MCF 10A (cell line): ENCODE measurements at regions of chr17 and their contacts with region 1.

Region 1: DNA sequence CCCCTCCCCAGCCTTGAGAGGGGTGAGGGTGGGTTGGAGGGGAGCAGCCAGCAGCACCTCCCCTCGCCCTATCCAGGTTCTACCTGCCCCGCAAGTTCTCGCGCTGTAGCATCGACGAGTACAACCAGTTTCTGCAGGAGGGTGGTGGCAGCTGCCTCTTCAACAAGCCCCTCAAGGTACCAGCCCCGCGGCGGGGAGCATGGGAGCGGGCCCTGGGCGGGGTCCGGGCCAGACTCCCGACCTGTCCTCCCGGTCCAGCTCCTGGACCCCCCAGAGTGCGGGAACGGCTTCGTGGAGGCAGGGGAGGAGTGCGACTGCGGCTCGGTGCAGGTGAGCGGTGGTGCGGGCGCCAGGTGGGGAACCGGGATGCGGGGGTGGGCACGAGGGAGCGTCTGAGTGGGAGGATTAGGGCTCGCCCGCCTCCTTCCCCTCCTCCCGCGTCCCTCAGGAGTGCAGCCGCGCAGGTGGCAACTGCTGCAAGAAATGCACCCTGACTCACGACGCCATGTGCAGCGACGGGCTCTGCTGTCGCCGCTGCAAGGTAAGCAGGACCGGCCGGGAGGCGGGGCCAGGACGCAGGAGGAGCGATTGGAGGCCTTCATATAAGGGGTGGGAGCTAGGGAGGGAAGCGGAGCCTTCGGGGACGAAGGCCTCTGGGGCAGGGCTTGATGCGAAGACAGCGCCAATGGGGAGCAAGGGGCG is 16.5 kb downstream of the ADAM11 start:
- DNase-seq: peak; percentile 99
- H3K4me3 Mint-ChIP-seq: peak overlapping the region; percentile 84
- H3K27ac Mint-ChIP-seq: no peak overlapping the region
- H3K4me1 Mint-ChIP-seq: peaks cover 11% of the 10 kb centered on the region
- H3K27me3 Mint-ChIP-seq: peaks cover 13% of the 10 kb centered on the region
- CTCF ChIP-seq: no peak

Region 2: GRCh38 chr17:44543213-44543904 is 231.9 kb before region 1 on chr17:
- CTCF ChIA-PET with region 1: no interaction called
- POLR2A ChIA-PET with region 1: no interaction called
- intact Hi-C with region 1: no loop called
- DNase-seq: peak; percentile 60
- H3K4me3 Mint-ChIP-seq: peak overlapping the region; percentile 14
- H3K27ac Mint-ChIP-seq: peak overlapping the region; percentile 92
- H3K4me1 Mint-ChIP-seq: peaks cover 51% of the 10 kb centered on the region
- H3K27me3 Mint-ChIP-seq: no peaks in the 10 kb centered on the region
- CTCF ChIP-seq: no peak

Region 3: GRCh38 chr17:44794851-44795413 is 19.6 kb after region 1 on chr17:
- CTCF ChIA-PET with region 1: interaction called, 11 read pairs
- POLR2A ChIA-PET with region 1: no interaction called
- intact Hi-C with region 1: no loop called
- DNase-seq: peak; percentile 47
- H3K4me3 Mint-ChIP-seq: no peak overlapping the region
- H3K27ac Mint-ChIP-seq: peak overlapping the region; percentile 27
- H3K4me1 Mint-ChIP-seq: peaks cover 10% of the 10 kb centered on the region
- H3K27me3 Mint-ChIP-seq: no peaks in the 10 kb centered on the region
- CTCF ChIP-seq: no peak

Region 4: GRCh38 chr17:44829523-44830358 is 54.5 kb after region 1 on chr17 and contains the start of gene GJC1:
- CTCF ChIA-PET with region 1: interaction called, 6 read pairs
- POLR2A ChIA-PET with region 1: interaction called, 7 read pairs
- intact Hi-C with region 1: loop called (anchors 1 kb)
- DNase-seq: peak; percentile 29
- H3K4me3 Mint-ChIP-seq: peak within 1 kb of the TSS; percentile 95
- H3K27ac Mint-ChIP-seq: peak within 1 kb of the TSS; percentile 68
- H3K4me1 Mint-ChIP-seq: peaks cover 11% of the 10 kb centered on the region
- H3K27me3 Mint-ChIP-seq: no peaks in the 10 kb centered on the region
- CTCF ChIP-seq: no peak
- total RNA-seq, gene GJC1: 6.9 and 7.9 TPM in 2 replicates

Region 5: GRCh38 chr17:44864866-44865660 is 89.8 kb after region 1 on chr17:
- CTCF ChIA-PET with region 1: interaction called, 233 read pairs
- POLR2A ChIA-PET with region 1: interaction called, 11 read pairs
- intact Hi-C with region 1: loop called (anchors 1 kb)
- DNase-seq: peak; percentile 71
- H3K4me3 Mint-ChIP-seq: no peak overlapping the region
- H3K27ac Mint-ChIP-seq: no peak overlapping the region
- H3K4me1 Mint-ChIP-seq: no peaks in the 10 kb centered on the region
- H3K27me3 Mint-ChIP-seq: no peaks in the 10 kb centered on the region
- CTCF ChIP-seq: peak; percentile 82

Region 6: GRCh38 chr17:44878627-44879221 is 103.4 kb after region 1 on chr17:
- CTCF ChIA-PET with region 1: interaction called, 48 read pairs
- POLR2A ChIA-PET with region 1: interaction called, 3 read pairs
- intact Hi-C with region 1: loop called (anchors 1 kb)
- DNase-seq: peak; percentile 42
- H3K4me3 Mint-ChIP-seq: no peak overlapping the region
- H3K27ac Mint-ChIP-seq: no peak overlapping the region
- H3K4me1 Mint-ChIP-seq: no peaks in the 10 kb centered on the region
- H3K27me3 Mint-ChIP-seq: no peaks in the 10 kb centered on the region
- CTCF ChIP-seq: peak; percentile 41

Region 7: DNA sequence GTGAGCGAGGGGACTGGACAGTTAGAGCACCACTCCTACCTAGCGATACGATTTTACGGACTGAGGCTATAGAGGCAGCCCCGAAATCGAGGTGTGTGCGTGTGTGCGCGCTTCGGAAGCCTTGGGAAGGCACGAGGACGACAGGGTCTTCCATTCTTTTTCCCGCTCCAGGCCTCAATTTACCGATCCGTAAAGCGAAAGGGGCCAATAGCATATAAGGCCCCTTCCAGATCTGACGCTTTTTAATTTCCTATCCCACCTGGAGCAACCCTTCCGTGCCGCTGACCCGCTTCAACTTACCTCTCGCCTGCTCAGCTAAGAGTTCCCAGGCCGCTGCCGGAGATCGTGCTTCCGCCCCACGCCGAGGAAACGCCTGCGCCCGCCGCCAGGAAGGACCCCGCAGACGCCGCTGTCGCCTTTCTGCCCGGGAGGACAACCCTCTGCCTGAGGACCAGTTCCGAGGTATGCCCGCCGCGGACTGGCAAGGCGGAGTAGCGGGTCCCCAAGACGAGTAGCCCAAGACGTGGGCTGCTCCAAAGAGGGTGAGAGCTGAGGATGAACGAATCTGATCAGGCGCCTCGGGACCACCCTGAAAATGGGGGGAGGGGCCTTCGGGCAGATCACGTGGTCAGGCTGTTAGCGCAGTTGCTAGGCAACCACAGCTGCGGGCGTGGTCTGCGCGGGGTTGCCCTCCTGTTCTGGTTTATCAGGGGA is 123.9 kb after region 1 on chr17 and contains the start of gene EFTUD2:
- CTCF ChIA-PET with region 1: interaction called, 10 read pairs
- POLR2A ChIA-PET with region 1: interaction called, 8 read pairs
- intact Hi-C with region 1: no loop called
- DNase-seq: peak; percentile 87
- H3K4me3 Mint-ChIP-seq: peak within 1 kb of the TSS; percentile 80
- H3K27ac Mint-ChIP-seq: peak within 1 kb of the TSS; percentile 99
- H3K4me1 Mint-ChIP-seq: peaks cover 21% of the 10 kb centered on the region
- H3K27me3 Mint-ChIP-seq: no peaks in the 10 kb centered on the region
- CTCF ChIP-seq: no peak
- total RNA-seq, gene EFTUD2: 119 and 125 TPM in 2 replicates

Region 8: DNA sequence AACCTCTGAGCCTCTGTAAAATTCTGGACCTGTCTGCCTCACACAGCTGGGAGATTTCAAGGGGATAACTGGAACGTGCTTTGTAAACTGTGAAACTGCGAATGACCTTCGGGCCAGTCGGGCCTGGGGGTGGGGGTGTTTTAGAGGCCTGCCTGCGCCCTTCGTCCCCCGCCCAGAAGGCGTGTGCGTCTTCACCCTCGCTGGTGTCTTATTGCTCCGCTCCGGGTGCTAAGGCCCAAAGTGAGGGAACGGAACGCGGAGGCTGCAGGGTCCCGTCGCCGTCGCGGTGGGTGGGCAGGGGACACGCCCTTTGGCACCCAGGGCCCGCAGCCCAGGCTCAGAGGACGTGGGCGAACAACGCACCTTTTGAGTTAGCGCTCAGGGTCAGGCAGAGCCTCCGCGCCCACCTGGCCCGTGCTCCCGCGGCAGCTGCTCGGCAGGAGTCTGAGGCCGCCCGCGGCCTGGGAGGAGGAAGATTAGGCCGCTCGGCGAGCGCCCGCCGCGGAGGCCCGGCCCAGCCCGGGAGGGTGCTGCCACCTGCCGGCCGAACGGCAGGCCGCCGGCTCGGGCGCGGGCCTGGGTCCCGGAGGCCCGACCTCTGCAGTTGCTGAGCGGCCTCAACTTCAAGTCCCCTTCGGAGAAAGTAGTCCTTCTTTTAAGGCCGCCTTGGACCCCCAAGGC is 246.5 kb after region 1 on chr17:
- CTCF ChIA-PET with region 1: interaction called, 5 read pairs
- POLR2A ChIA-PET with region 1: no interaction called
- intact Hi-C with region 1: loop called (anchors 1 kb)
- DNase-seq: peak; percentile 56
- H3K4me3 Mint-ChIP-seq: no peak overlapping the region
- H3K27ac Mint-ChIP-seq: no peak overlapping the region
- H3K4me1 Mint-ChIP-seq: peaks cover 18% of the 10 kb centered on the region
- H3K27me3 Mint-ChIP-seq: no peaks in the 10 kb centered on the region
- CTCF ChIP-seq: peak; percentile 80